MCF 10A (cell line): ENCODE measurements at regions of chr6 and their contacts with region 1.

Region 1: DNA sequence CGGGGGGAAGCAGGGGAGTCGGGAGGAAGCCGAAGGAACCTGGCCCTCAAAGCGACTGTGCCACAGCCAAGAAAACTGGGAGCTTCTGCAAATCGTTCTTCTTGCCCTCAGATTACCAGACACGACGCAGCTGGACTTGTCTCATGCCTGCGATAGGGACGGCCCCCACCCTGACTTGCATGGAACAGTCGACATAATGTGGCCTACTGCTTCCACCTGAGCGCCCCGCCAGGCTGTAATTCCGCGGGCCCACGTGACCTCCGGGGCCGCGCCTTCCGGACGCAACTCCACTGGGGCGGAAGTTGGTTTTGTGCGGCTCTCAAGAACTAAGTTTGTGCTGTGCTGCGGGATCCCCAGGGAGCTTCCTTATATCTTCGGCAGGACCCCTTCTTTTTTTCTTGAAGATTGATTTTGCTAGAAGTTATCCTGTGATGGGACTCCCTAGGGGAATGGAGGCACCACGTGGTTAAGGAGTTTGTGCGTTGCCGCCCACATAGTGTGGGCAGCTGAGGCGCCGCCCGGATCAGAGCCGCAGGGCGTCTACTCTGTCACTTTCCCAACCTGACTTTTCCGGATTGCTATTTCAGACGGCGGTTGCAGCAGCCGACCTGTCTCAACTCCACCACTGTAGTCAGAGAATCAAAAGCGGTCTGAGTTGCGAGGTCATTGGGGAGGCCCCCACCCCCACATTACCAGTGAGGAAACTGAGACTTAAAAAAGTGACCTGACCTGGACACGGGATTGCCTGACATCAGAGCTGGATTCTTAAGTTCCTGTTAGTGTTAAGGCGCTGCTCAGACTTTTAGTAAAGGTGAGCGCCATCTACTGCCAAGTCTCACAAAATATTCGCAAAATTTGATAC is 540 bp upstream of the CD164 start:
- DNase-seq: peak; percentile 94
- H3K4me3 Mint-ChIP-seq: peak overlapping the region; percentile 88
- H3K27ac Mint-ChIP-seq: peak overlapping the region; percentile 100
- H3K4me1 Mint-ChIP-seq: peaks cover 34% of the 10 kb centered on the region
- H3K27me3 Mint-ChIP-seq: no peaks in the 10 kb centered on the region
- CTCF ChIP-seq: peak; percentile 31

Region 2: DNA sequence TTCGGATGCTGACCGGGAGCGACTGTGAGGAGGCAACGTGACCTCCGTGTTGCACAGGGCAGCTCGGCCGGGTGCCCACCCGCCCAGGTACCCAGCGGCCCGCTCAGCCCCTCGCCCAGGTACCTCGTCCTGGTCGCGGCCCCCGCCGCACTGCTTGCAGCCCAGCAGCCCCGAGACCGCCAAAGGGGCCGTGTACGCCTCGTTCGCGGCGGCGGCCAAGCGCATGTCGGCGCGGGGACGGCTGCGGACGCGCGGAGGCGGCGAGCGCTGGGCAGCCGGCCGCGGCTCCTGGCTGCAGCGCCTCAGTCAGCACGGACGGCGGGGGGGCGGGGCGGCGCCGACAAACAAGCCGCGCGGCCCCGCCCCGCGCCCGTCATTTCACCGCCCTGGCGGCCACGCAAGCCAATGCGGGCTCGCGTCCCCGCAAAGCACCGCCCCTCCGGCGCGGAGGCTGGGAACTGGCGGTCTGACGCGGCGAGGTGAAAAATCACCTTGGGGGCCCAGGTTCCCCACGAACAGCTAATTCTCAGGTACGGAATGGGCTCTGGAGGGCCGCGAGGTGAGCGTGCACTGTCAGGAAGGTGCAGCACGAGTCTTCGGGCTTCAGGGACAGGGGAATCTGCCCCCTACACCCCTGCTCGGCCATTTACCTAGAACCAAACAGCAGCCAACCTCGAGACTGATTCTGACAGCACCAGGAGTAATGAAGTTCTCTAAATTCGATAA is 373.4 kb before region 1 on chr6:
- CTCF ChIA-PET with region 1: no interaction called
- POLR2A ChIA-PET with region 1: interaction called, 31 read pairs
- intact Hi-C with region 1: loop called (anchors 5 kb)
- DNase-seq: peak; percentile 89
- H3K4me3 Mint-ChIP-seq: peak overlapping the region; percentile 93
- H3K27ac Mint-ChIP-seq: peak overlapping the region; percentile 94
- H3K4me1 Mint-ChIP-seq: peaks cover 24% of the 10 kb centered on the region
- H3K27me3 Mint-ChIP-seq: no peaks in the 10 kb centered on the region
- CTCF ChIP-seq: no peak

Region 3: GRCh38 chr6:109187399-109188114 is 195.2 kb before region 1 on chr6:
- CTCF ChIA-PET with region 1: interaction called, 80 read pairs
- POLR2A ChIA-PET with region 1: interaction called, 49 read pairs
- intact Hi-C with region 1: loop called (anchors 1 kb)
- DNase-seq: peak; percentile 68
- H3K4me3 Mint-ChIP-seq: no peak overlapping the region
- H3K27ac Mint-ChIP-seq: no peak overlapping the region
- H3K4me1 Mint-ChIP-seq: peaks cover 1% of the 10 kb centered on the region
- H3K27me3 Mint-ChIP-seq: peaks cover 50% of the 10 kb centered on the region
- CTCF ChIP-seq: peak; percentile 92

Region 4: DNA sequence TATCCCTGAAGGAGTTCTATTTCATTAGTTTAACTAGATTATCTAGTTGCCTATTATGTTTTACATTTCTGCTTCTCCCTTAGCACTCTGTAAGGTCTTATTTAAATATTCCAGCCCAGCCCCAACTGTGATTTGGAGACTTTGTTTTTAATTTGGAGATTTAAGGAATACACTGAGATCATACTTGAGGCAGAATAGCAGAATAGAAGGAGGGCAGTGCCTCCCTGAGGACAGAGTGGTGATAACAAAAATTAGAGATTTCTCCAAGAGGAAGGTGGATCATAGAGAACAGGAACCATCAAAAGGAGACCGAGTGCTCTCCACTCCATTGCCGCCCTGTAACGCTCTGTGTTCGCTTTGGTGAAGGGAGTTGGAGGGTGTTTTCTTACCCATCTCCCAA is 14.2 kb after region 1 on chr6:
- CTCF ChIA-PET with region 1: interaction called, 14 read pairs
- POLR2A ChIA-PET with region 1: interaction called, 31 read pairs
- intact Hi-C with region 1: no loop called
- DNase-seq: peak; percentile 35
- H3K4me3 Mint-ChIP-seq: no peak overlapping the region
- H3K27ac Mint-ChIP-seq: no peak overlapping the region
- H3K4me1 Mint-ChIP-seq: peaks cover 12% of the 10 kb centered on the region
- H3K27me3 Mint-ChIP-seq: no peaks in the 10 kb centered on the region
- CTCF ChIP-seq: peak; percentile 18

Region 5: GRCh38 chr6:109440331-109441068 is 57.7 kb after region 1 on chr6 and contains the starts of genes PPIL6 and SMPD2:
- CTCF ChIA-PET with region 1: interaction called, 25 read pairs
- POLR2A ChIA-PET with region 1: interaction called, 93 read pairs
- intact Hi-C with region 1: loop called (anchors 1 kb)
- DNase-seq: peak; percentile 82
- H3K4me3 Mint-ChIP-seq: peak within 1 kb of the TSS; percentile 89
- H3K27ac Mint-ChIP-seq: peak within 1 kb of the TSS; percentile 96
- H3K4me1 Mint-ChIP-seq: peaks cover 8% of the 10 kb centered on the region
- H3K27me3 Mint-ChIP-seq: no peaks in the 10 kb centered on the region
- CTCF ChIP-seq: no peak
- total RNA-seq, gene PPIL6: 3.9 and 6.5 TPM in 2 replicates
- total RNA-seq, gene SMPD2: 17.7 and 19.9 TPM in 2 replicates

Region 6: GRCh38 chr6:109455502-109456282 is 72.9 kb after region 1 on chr6 and contains the start of gene MICAL1:
- CTCF ChIA-PET with region 1: interaction called, 4 read pairs
- POLR2A ChIA-PET with region 1: interaction called, 11 read pairs
- intact Hi-C with region 1: loop called (anchors 5 kb)
- DNase-seq: peak; percentile 32
- H3K4me3 Mint-ChIP-seq: peak within 1 kb of the TSS; percentile 93
- H3K27ac Mint-ChIP-seq: peak within 1 kb of the TSS; percentile 63
- H3K4me1 Mint-ChIP-seq: peaks cover 12% of the 10 kb centered on the region
- H3K27me3 Mint-ChIP-seq: no peaks in the 10 kb centered on the region
- CTCF ChIP-seq: no peak
- total RNA-seq, gene MICAL1: 23.2 and 35.3 TPM in 2 replicates